ENCODE measurements at regions of chr3 and their contacts with region 1.

Region 1: GRCh38 chr3:137105277-137105977 is 147.6 kb downstream of the IL20RB start:
- DNase-seq: no peak
- H3K4me3 ChIP-seq: no peak overlapping the region
- H3K27ac ChIP-seq: peak overlapping the region in 1 of 4 donors; percentile 11
- H3K4me1 ChIP-seq: peaks cover 0 to 19% (median 9%) of the 10 kb centered on the region in 4 donors
- H3K27me3 ChIP-seq: peaks cover 0 to 16% (median 0%) of the 10 kb centered on the region in 4 donors
- CTCF ChIP-seq: peak; percentile 59 to 67 (median 66)
- EP300 ChIP-seq: no peak
- POLR2A ChIP-seq: no peak

Region 2: GRCh38 chr3:136802481-136802996 is 302.9 kb before region 1 on chr3:
- intact Hi-C with region 1: no loop called
- DNase-seq: no peak
- H3K4me3 ChIP-seq: no peak overlapping the region
- H3K27ac ChIP-seq: peak overlapping the region in 2 of 4 donors; percentile 13 to 34
- H3K4me1 ChIP-seq: peaks cover 15 to 17% (median 17%) of the 10 kb centered on the region in 4 donors
- H3K27me3 ChIP-seq: no peaks in the 10 kb centered on the region
- CTCF ChIP-seq: no peak
- EP300 ChIP-seq: no peak
- POLR2A ChIP-seq: no peak

Region 3: GRCh38 chr3:137061186-137061585 is 44.2 kb before region 1 on chr3:
- intact Hi-C with region 1: no loop called
- DNase-seq: no peak
- H3K4me3 ChIP-seq: no peak overlapping the region
- H3K27ac ChIP-seq: no peak overlapping the region
- H3K4me1 ChIP-seq: no peaks in the 10 kb centered on the region
- H3K27me3 ChIP-seq: no peaks in the 10 kb centered on the region
- CTCF ChIP-seq: no peak
- EP300 ChIP-seq: no peak
- POLR2A ChIP-seq: no peak

Region 4: GRCh38 chr3:137946345-137946973 is 841.0 kb after region 1 on chr3:
- intact Hi-C with region 1: loop called (anchors 5 kb)
- DNase-seq: peak; percentile 91
- H3K4me3 ChIP-seq: no peak overlapping the region
- H3K27ac ChIP-seq: no peak overlapping the region
- H3K4me1 ChIP-seq: peaks cover 0 to 6% (median 0%) of the 10 kb centered on the region in 4 donors
- H3K27me3 ChIP-seq: no peaks in the 10 kb centered on the region
- CTCF ChIP-seq: peak; percentile 53 to 70 (median 53)
- EP300 ChIP-seq: no peak
- POLR2A ChIP-seq: no peak

Region 5: GRCh38 chr3:137970914-137971831 is 865.7 kb after region 1 on chr3:
- intact Hi-C with region 1: loop called (anchors 5 kb)
- DNase-seq: no peak
- H3K4me3 ChIP-seq: no peak overlapping the region
- H3K27ac ChIP-seq: no peak overlapping the region
- H3K4me1 ChIP-seq: peaks cover 0 to 7% (median 4%) of the 10 kb centered on the region in 4 donors
- H3K27me3 ChIP-seq: no peaks in the 10 kb centered on the region
- CTCF ChIP-seq: peak; percentile 63 to 88 (median 76)
- EP300 ChIP-seq: no peak
- POLR2A ChIP-seq: no peak

Measured in esophagus muscularis mucosa (tissue), 4 donors.